Left lung (tissue), 14 donors: ENCODE measurements at regions of chr11 and their contacts with region 1.

Region 1: GRCh38 chr11:78416305-78417178 is 1.1 kb downstream of the GAB2 start:
- DNase-seq: peak; percentile 84 to 97 (median 90)
- ATAC-seq: peak; percentile 79
- H3K4me3 ChIP-seq: peak overlapping the region; percentile 71 to 82
- H3K27ac ChIP-seq: peak overlapping the region; percentile 99
- H3K4me1 ChIP-seq: peaks cover 6 to 78% of the 10 kb centered on the region in 2 donors
- H3K27me3 ChIP-seq: no peaks in the 10 kb centered on the region
- CTCF ChIP-seq: peak; percentile 47 to 65

Region 2: GRCh38 chr11:78228467-78228866 is 188.1 kb before region 1 on chr11:
- intact Hi-C with region 1: loop called in 1 of 2 experiments (anchors 10 kb)
- DNase-seq: peak in 1 of 4 donors; percentile 62
- ATAC-seq: peak; percentile 88
- H3K4me3 ChIP-seq: no peak overlapping the region
- H3K27ac ChIP-seq: no peak overlapping the region
- H3K4me1 ChIP-seq: peaks cover 0 to 26% of the 10 kb centered on the region in 2 donors
- H3K27me3 ChIP-seq: no peaks in the 10 kb centered on the region
- CTCF ChIP-seq: peak; percentile 39 to 51

Region 3: GRCh38 chr11:78379039-78379670 is 37.4 kb before region 1 on chr11:
- intact Hi-C with region 1: no loop called
- DNase-seq: no peak
- ATAC-seq: peak; percentile 72
- H3K4me3 ChIP-seq: no peak overlapping the region
- H3K27ac ChIP-seq: no peak overlapping the region
- H3K4me1 ChIP-seq: peaks cover 0 to 35% of the 10 kb centered on the region in 2 donors
- H3K27me3 ChIP-seq: no peaks in the 10 kb centered on the region
- CTCF ChIP-seq: no peak

Region 4: GRCh38 chr11:78564490-78565467 is 148.2 kb after region 1 on chr11:
- intact Hi-C with region 1: loop called in 1 of 2 experiments (anchors 10 kb)
- DNase-seq: peak in 2 of 4 donors; percentile 59 to 72
- ATAC-seq: peak; percentile 70
- H3K4me3 ChIP-seq: no peak overlapping the region
- H3K27ac ChIP-seq: no peak overlapping the region
- H3K4me1 ChIP-seq: peaks cover 21 to 40% of the 10 kb centered on the region in 2 donors
- H3K27me3 ChIP-seq: no peaks in the 10 kb centered on the region
- CTCF ChIP-seq: peak; percentile 60 to 71